ENCODE measurements at regions of chrX and their contacts with region 1.

Region 1: DNA sequence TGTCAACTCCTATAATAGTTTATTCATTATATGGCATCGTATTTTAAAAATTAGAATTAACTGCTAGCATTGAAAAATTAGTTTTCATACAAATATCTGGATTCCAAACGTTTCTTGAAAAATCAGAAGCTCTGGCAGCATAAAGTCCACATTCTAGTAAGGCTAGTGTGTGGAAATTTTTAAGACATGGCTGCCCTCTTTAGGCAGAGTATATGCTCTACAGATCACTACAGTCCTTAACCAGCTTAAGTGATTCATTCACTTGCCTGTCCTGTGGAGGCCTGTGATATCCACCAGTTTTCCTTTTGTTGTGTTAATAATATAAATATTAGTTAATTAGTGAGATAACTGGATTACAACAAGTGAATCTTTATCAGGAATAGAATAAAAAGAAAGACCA is 287.2 kb downstream of the OPHN1 start:
- DNase-seq: peak; percentile 34
- H3K4me3 ChIP-seq: no peak overlapping the region
- H3K27ac ChIP-seq: no peak overlapping the region
- H3K4me1 ChIP-seq: no peaks in the 10 kb centered on the region
- H3K27me3 ChIP-seq: no peaks in the 10 kb centered on the region
- CTCF ChIP-seq: peak; percentile 43 to 52

Region 2: GRCh38 chrX:67555578-67556203 is 590.4 kb before region 1 on chrX:
- CTCF ChIA-PET with region 1: interaction called, 4 read pairs
- dilution Hi-C with region 1: no loop called
- in situ Hi-C with region 1: loop called (anchors 25 kb)
- intact Hi-C with region 1: loop called (anchors 1 kb)
- DNase-seq: peak; percentile 15
- H3K4me3 ChIP-seq: no peak overlapping the region
- H3K27ac ChIP-seq: no peak overlapping the region
- H3K4me1 ChIP-seq: no peaks in the 10 kb centered on the region
- H3K27me3 ChIP-seq: no peaks in the 10 kb centered on the region
- CTCF ChIP-seq: peak; percentile 69 to 83

Region 3: GRCh38 chrX:68018681-68019111 is 127.4 kb before region 1 on chrX:
- CTCF ChIA-PET with region 1: no interaction called
- dilution Hi-C with region 1: no loop called
- in situ Hi-C with region 1: no loop called
- intact Hi-C with region 1: loop called (anchors 2 kb)
- DNase-seq: peak; percentile 26
- H3K4me3 ChIP-seq: no peak overlapping the region
- H3K27ac ChIP-seq: no peak overlapping the region
- H3K4me1 ChIP-seq: no peaks in the 10 kb centered on the region
- H3K27me3 ChIP-seq: no peaks in the 10 kb centered on the region
- CTCF ChIP-seq: peak; percentile 43 to 53

Region 4: DNA sequence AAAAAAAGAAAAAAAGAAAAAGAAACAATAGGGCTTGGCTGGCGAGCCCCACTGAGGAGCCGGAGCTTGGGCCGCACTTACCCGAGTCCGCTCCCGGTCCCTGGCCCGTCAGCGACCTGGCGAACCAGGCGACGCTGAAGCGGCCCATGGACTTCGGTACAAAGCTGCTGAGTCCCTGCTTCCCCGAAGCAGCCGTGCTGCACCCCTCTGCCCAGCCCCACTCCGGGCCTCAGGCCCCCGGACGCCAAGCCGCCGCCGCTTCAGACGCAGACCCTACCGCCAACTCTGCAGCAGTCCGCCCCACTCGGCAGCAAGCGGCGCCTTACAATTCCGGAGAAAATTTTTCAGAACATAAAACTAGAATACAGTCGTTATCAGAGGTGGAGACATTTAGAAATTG is 13.3 kb before region 1 on chrX:
- CTCF ChIA-PET with region 1: no interaction called
- dilution Hi-C with region 1: no loop called
- in situ Hi-C with region 1: no loop called
- intact Hi-C with region 1: no loop called
- DNase-seq: no peak
- H3K4me3 ChIP-seq: no peak overlapping the region
- H3K27ac ChIP-seq: no peak overlapping the region
- H3K4me1 ChIP-seq: no peaks in the 10 kb centered on the region
- H3K27me3 ChIP-seq: no peaks in the 10 kb centered on the region
- CTCF ChIP-seq: no peak